ENCODE measurements at regions of chr7 and their contacts with region 1.

Region 1: DNA sequence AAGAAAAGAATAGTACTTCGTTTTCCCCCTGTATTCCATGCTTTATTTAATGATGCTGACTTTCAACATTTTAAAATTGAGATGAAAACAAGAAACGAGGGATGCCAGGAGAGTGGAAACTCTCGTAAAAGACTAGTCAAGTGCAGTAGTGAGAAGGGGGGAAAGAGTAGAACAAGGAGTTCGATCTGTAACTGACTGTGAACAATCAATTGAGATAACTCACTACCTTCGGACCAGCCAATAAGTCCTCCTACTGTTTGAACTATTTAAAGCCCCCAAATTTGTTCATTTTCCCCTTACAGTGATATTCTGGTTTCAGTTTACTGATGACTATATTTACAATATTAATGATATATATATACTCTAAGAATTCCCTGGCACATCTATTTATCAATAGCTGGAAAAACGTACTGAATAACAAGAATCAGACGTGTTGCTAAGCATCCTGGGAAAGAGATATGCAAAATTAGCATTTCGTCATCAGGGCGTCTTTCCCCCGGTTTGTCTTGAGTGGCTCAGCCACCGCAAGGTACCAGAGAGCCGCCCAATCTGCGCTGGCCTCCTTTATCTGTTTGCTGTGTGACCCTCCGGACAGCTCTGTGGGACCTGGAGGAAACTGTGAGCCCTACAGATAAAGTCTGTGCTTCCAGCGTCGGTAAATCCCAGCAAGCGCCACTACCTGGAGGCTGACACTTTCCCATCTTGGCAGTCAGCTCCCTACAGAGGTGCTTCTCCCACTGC is 41.1 kb downstream of the PDIA4 start:
- DNase-seq: peak; percentile 87
- H3K4me3 Mint-ChIP-seq: peak overlapping the region; percentile 95
- H3K27ac Mint-ChIP-seq: peak overlapping the region; percentile 92
- H3K4me1 Mint-ChIP-seq: peaks cover 40% of the 10 kb centered on the region
- H3K27me3 Mint-ChIP-seq: peaks cover 2% of the 10 kb centered on the region

Region 2: DNA sequence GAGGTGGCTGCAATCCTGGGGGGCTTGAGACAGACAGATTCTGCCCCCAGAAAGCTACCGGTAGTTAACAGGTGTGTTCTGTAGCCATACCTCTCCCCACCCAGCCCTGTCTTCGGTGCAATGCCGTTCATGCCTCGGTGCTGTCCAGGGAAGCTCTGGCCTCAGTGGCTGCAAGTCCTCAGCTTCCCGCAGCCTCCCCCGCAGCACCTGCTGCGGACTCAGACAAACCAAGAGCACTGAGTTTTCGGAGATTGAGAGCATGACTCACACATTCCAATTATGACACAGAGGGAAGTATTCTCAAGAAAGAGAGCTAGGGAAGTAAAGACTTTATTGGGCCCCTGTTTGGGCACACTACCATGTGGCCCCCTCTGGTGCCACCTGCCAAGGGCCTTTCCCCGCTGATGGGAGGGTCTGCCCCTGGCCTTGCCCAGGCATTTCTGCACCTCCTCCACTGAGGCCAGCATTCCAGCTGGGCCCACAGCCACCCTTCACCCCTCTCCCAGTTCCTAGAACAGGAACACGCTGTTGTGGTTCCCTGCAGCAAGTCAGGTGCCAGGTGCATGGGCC is 72.9 kb before region 1 on chr7:
- CTCF ChIA-PET with region 1: no interaction called
- POLR2A ChIA-PET with region 1: no interaction called
- intact Hi-C with region 1: loop called (anchors 1 kb)
- DNase-seq: peak; percentile 87
- H3K4me3 Mint-ChIP-seq: peak overlapping the region; percentile 62
- H3K27ac Mint-ChIP-seq: peak overlapping the region; percentile 93
- H3K4me1 Mint-ChIP-seq: peaks cover 66% of the 10 kb centered on the region
- H3K27me3 Mint-ChIP-seq: no peaks in the 10 kb centered on the region

Region 3: DNA sequence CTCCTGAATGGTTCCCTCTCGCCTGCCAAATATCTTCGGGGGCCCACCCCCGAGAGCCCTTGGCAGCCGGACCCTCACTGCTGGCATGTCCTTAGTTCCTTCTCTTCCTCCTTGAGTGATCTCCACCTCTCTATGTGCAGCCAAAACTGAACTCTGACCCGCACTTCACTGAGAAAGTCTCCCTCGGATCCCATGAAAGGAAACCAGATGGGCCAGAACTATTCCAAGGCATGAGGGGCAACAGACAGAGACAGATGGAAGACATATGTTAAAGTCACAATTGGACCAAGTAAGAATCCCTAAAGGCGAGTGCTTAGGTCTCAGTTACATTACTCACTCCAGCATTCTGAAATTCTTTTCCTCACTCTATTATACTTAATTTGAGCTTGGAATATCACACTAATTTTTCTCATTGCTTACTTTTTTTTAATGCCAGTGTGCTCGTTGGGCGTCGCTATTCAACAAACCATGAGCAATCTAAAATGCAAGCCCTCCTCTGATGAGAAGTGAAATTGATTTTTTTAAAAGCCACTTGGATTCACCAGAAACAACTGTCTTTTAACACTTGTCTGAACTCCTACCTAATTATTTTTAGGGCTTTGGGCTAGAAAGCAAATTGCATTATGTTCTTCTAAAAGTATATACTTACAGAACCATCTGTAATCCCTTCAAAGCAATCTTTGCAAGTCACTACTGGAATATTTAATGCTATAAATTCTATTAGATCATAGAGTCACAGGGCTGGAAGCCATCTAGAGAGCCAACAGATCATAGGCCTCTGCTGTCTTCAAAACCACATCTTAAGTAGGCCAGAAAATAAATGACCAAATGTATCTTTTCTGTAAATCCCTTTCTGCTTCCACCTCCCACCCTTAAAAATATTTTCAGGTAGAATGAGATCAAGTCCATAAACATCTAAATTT is 59.8 kb before region 1 on chr7:
- CTCF ChIA-PET with region 1: no interaction called
- POLR2A ChIA-PET with region 1: no interaction called
- intact Hi-C with region 1: no loop called
- DNase-seq: no peak
- H3K4me3 Mint-ChIP-seq: no peak overlapping the region
- H3K27ac Mint-ChIP-seq: peak overlapping the region; percentile 76
- H3K4me1 Mint-ChIP-seq: peaks cover 33% of the 10 kb centered on the region
- H3K27me3 Mint-ChIP-seq: no peaks in the 10 kb centered on the region

Region 4: GRCh38 chr7:149005241-149006050 is 18.3 kb after region 1 on chr7:
- CTCF ChIA-PET with region 1: interaction called, 10 read pairs
- POLR2A ChIA-PET with region 1: interaction called, 3 read pairs
- intact Hi-C with region 1: loop called (anchors 2 kb)
- DNase-seq: peak; percentile 85
- H3K4me3 Mint-ChIP-seq: no peak overlapping the region
- H3K27ac Mint-ChIP-seq: no peak overlapping the region
- H3K4me1 Mint-ChIP-seq: peaks cover 3% of the 10 kb centered on the region
- H3K27me3 Mint-ChIP-seq: no peaks in the 10 kb centered on the region

Region 5: DNA sequence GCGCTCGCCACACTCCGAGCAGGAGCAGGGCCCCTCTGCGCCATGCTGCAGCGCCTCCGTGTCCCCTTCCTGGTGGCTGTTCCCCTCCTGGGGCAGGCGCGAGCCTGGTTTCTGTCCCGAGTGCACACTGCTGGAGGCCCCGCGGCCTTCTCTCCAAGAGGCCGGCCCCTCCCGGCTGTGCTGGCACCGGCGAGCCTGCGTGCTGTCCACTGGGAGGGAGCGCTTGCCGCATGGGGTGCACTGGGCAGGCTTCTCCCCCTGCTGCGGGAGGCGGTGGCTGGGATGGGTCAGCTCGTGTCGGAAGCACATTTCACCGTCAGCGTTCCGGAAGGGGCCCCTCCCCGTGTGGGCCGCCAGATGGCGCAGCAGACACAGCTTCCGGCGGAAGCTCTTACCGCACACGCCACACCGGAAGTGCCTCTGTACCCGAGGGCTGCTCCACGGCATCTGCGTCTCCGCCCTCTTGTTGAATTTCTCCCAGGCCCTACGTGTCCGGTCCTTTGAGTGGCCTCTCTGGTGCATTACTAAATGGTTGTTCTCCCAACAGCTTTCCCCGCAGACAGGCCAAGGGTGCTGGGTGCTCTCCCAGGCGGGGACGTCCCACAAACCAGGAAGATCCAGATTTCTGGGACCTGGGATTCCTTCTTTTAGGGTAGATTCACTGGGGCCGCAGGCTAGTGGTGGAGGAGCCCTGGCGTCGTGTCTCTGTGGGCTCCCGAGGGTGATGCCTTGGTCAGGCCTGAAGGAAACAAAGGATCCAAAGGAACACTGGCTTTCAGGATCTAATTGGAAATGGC is 84.7 kb after region 1 on chr7:
- CTCF ChIA-PET with region 1: no interaction called
- POLR2A ChIA-PET with region 1: interaction called, 3 read pairs
- intact Hi-C with region 1: loop called (anchors 5 kb)
- DNase-seq: peak; percentile 59
- H3K4me3 Mint-ChIP-seq: peak overlapping the region; percentile 20
- H3K27ac Mint-ChIP-seq: no peak overlapping the region
- H3K4me1 Mint-ChIP-seq: peaks cover 4% of the 10 kb centered on the region
- H3K27me3 Mint-ChIP-seq: no peaks in the 10 kb centered on the region

Region 6: GRCh38 chr7:149422129-149422913 is 435.1 kb after region 1 on chr7:
- CTCF ChIA-PET with region 1: no interaction called
- POLR2A ChIA-PET with region 1: no interaction called
- intact Hi-C with region 1: loop called (anchors 5 kb)
- DNase-seq: peak; percentile 80
- H3K4me3 Mint-ChIP-seq: peak overlapping the region; percentile 72
- H3K27ac Mint-ChIP-seq: peak overlapping the region; percentile 51
- H3K4me1 Mint-ChIP-seq: peaks cover 9% of the 10 kb centered on the region
- H3K27me3 Mint-ChIP-seq: no peaks in the 10 kb centered on the region